A549 (cell line): ENCODE measurements at regions of chr17 and their contacts with region 1.

Region 1: DNA sequence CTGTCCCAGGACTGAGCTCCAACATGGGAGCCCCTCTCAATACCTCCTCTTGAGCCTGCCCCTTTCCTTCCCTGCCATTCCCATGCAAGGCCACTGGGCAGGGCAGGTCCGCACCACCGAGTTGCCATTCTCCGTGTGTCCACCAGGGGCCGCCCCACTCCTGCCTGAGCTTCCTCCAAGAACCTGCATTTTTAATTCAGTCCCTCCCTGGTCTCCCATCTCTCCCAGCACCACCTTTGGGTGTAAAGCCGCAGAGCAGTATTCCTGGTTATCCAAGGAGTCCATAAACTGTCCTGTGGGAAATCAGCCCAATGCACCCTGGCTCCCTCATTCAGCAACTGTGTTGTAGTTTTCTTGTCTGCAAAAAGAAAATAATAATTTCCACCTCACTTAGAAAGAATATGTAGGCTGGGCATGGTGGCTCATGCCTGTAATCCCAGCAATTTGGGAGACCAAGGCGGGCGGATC is 15.9 kb upstream of the ANKRD40CL start:
- DNase-seq: peak; percentile 96 to 99
- ATAC-seq: peak; percentile 97 to 99
- H3K4me3 ChIP-seq: no peak overlapping the region
- H3K27ac ChIP-seq: no peak overlapping the region
- H3K4me1 ChIP-seq: 0 out of 3 replicates have a peak, but pooled peaks cover 3% of the 10 kb centered on the region
- CTCF ChIP-seq: peak; percentile 98
- EP300 ChIP-seq: no peak
- POLR2A ChIP-seq: no peak
- RAD21 ChIP-seq: peak; percentile 97 to 98

Region 2: DNA sequence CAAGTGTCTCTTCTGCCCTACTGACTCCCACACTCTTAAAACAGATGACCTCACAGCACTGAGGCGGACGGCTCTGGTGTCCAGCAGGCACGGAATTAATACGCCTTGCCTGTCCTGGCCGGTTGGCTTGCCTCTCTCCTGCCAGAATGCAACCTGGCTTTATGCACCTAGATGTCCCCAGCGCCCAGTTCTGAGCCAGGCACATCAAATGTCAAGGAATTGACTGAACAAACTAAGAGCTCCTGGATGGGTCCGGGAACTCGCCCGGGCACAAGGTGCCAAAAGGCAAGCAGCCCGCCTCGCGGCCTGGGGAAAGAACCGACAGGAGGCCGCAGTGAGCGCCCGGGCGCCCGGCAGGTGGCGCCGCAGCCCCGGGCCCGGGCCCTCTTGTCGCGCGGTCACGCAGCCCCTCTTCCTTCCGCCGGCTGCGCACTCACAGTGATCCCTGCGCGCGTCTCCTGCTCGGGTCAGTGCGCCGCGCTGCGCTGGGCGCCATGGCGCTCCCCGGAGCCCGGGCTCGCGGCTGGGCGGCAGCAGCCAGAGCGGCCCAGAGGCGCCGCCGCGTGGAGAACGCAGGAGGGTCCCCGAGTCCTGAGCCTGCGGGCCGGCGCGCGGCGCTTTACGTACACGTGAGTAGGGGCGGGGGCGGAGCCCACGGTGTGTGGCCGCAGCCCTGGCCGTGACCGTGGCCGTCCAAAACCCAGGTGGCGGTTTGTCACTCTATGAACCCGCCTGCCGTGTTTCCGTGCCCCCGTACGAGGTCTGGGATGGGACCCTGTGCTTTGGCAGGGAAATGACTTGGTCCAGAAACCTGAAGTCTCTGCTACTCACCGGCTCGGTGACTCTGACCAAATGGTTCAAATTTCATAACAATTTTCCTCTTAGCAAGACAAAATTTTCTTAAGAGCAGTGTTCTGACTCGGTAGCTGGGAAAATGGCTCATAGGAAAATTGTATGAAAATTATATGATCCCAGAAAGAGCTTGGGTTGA is 304.5 kb before region 1 on chr17 and contains the start of gene RSAD1:
- CTCF ChIA-PET with region 1: interaction called, 12 read pairs
- POLR2A ChIA-PET with region 1: no interaction called
- DNase-seq: peak; percentile 85 to 96
- ATAC-seq: peak; percentile 78 to 89
- H3K4me3 ChIP-seq: peak within 1 kb of the TSS; percentile 65
- H3K27ac ChIP-seq: peak within 1 kb of the TSS; percentile 79 to 91
- H3K4me1 ChIP-seq: peaks cover 31% of the 10 kb centered on the region
- CTCF ChIP-seq: peak; percentile 100
- EP300 ChIP-seq: no peak
- POLR2A ChIP-seq: peak; percentile 90
- RAD21 ChIP-seq: peak; percentile 41 to 78
- polyA plus RNA-seq, gene RSAD1: 38.2 and 47.2 TPM in 2 replicates

Region 3: DNA sequence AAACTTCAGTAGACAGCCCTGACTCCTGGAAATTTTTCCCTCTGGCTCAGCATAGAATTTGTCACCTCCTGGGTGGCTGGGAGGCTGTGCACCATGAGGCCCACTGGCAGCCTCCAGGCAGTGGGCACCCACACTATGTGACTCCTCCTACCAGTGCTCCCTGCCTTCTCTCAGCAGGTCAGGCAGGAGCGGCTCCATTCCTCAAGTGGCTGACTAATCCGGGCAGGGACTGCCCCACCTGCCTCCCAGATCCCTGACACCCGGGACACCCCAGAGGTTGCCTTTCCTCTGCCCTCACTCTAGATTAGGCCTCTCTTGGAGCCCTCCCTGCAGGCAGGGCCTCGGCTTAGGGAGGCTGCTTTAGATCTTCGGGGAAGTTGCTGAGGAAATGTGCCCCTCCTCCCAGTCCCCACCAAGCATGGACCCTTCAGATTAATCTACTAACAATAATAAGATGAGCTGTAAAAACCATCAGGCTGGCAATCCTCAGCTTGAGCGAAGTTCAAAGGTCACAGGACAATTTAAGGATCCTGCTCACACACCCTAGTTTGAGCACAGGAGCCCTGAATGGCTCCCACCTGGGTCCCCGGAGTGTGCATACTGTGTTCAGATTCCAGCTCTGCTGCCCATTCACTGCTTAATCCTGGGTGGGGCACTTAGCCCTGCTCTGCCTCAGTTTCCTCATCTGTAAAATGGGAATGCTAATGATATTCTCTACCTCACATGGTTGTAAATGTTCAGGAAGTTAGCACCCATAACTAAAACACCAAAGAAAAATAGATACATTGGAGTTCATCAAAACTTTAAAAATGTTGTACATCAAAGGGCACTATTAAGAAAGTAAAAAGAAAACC is 285.0 kb before region 1 on chr17:
- CTCF ChIA-PET with region 1: no interaction called
- POLR2A ChIA-PET with region 1: no interaction called
- DNase-seq: no peak
- ATAC-seq: peak in 1 of 2 experiments; percentile 25; a peak in 3 of 6 replicates
- H3K4me3 ChIP-seq: no peak overlapping the region
- H3K27ac ChIP-seq: no peak overlapping the region
- H3K4me1 ChIP-seq: peaks cover 5% of the 10 kb centered on the region; the same call in 1 of the 3 replicates
- CTCF ChIP-seq: no peak
- EP300 ChIP-seq: no peak
- POLR2A ChIP-seq: no peak
- RAD21 ChIP-seq: no peak

Region 4: DNA sequence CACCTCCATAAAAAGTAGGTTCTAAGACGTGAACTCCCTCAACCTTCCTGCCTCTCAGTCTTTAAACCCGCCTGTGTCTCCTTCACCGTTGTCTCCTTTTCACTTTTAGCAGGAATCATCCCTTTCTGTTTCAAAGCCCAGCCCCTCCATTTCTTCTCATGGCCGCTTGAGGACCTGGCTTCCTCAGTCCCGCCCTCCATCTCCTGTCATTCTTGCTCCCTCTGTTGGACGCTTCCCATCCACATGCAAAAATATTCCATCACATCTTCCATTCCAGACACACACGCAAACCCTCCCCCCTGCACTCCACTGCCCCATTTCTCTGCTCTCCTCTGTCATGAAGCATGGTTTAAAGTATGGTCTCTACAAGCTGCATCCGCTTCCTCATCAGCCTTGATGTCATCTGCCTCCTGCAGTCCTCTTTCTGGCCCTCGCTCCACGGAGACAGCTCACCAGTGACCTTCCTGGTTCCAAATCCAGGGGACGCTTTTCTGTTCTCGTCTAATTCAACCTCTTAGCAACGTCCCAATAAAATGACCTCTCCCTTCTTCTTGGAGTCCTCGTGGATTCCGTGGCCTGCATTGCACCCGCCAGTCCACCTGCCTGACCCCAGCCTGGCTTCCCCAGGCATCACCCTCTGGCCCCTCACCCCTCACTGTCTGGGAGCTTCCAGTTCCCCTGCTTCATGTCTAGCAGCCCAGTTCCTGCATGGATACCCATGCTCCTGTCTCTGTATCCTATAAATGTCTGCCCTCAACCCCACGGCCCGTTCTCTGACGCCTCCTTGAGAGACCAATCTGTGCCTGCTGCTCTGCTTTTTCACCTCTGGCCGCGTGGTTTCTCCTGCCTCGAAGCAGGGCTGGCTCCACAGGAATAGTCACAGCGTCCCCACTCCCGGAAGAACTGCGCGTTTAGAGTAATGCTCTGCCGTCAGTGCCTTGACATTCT is 101.7 kb before region 1 on chr17:
- CTCF ChIA-PET with region 1: no interaction called
- POLR2A ChIA-PET with region 1: no interaction called
- DNase-seq: peak; percentile 86 to 91
- ATAC-seq: peak; percentile 53 to 75
- H3K4me3 ChIP-seq: no peak overlapping the region
- H3K27ac ChIP-seq: peak overlapping the region; percentile 97 to 98
- H3K4me1 ChIP-seq: peaks cover 99% of the 10 kb centered on the region
- CTCF ChIP-seq: peak; percentile 66
- EP300 ChIP-seq: no peak
- POLR2A ChIP-seq: no peak
- RAD21 ChIP-seq: peak; percentile 81 to 94

Region 5: GRCh38 chr17:50749245-50749644 is 34.0 kb before region 1 on chr17:
- CTCF ChIA-PET with region 1: interaction called, 11 read pairs
- POLR2A ChIA-PET with region 1: no interaction called
- DNase-seq: no peak
- ATAC-seq: no peak; a peak in 1 of 6 replicates
- H3K4me3 ChIP-seq: no peak overlapping the region
- H3K27ac ChIP-seq: no peak overlapping the region
- H3K4me1 ChIP-seq: no peaks in the 10 kb centered on the region
- CTCF ChIP-seq: no peak
- EP300 ChIP-seq: no peak
- POLR2A ChIP-seq: no peak
- RAD21 ChIP-seq: no peak

Region 6: DNA sequence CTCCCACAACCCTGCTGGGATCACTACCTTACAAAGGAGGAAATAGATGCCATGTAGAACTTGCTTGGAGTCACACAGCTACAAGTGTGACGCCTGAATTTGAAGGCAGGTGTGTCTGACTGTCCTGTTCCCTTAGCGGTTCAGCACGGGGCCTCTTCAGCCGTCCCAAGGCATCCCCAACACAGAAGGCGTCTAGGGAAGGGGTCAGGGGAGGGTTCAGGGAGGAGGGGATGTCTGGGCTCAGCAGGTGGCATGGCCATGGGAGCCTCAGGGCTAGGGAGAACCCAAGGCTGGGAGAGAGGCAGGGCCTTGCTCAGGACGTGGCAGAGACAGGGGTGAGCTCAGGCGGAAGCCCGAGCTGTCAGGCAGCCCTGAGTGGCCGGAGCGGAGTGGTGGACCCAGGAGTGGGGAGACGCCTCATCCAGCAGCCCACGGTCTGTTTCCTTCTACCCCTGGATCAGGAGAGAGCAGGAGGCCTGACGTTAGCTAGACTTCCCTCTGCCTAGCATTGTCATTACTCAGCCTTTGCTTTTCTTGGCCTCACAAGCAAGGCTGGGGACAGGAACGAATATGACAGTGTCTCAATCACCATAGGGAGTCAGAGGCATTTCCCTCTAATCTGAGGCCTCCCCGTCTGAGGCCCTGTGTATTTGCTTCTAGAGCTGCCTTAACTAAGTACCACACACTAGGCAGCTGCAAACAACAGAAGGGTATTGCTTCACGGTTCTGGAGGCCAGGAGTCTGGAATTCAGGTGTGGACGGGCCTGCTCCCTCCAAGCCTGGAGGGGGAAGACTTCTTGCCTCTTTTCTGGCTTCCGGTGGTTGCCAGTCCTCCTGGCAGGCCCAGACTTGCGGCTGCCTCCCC is 15.4 kb after region 1 on chr17:
- CTCF ChIA-PET with region 1: interaction called, 114 read pairs
- POLR2A ChIA-PET with region 1: no interaction called
- DNase-seq: no peak
- ATAC-seq: peak in 1 of 2 experiments; percentile 28; a peak in 2 of 6 replicates
- H3K4me3 ChIP-seq: no peak overlapping the region
- H3K27ac ChIP-seq: no peak overlapping the region
- H3K4me1 ChIP-seq: no peaks in the 10 kb centered on the region
- CTCF ChIP-seq: no peak
- EP300 ChIP-seq: no peak
- POLR2A ChIP-seq: no peak
- RAD21 ChIP-seq: no peak

Region 7: GRCh38 chr17:50834429-50835300 is 51.4 kb after region 1 on chr17:
- CTCF ChIA-PET with region 1: interaction called, 324 read pairs
- POLR2A ChIA-PET with region 1: no interaction called
- DNase-seq: no peak
- ATAC-seq: no peak
- H3K4me3 ChIP-seq: no peak overlapping the region
- H3K27ac ChIP-seq: no peak overlapping the region
- H3K4me1 ChIP-seq: no peaks in the 10 kb centered on the region
- CTCF ChIP-seq: no peak
- EP300 ChIP-seq: no peak
- POLR2A ChIP-seq: no peak
- RAD21 ChIP-seq: no peak

Region 8: DNA sequence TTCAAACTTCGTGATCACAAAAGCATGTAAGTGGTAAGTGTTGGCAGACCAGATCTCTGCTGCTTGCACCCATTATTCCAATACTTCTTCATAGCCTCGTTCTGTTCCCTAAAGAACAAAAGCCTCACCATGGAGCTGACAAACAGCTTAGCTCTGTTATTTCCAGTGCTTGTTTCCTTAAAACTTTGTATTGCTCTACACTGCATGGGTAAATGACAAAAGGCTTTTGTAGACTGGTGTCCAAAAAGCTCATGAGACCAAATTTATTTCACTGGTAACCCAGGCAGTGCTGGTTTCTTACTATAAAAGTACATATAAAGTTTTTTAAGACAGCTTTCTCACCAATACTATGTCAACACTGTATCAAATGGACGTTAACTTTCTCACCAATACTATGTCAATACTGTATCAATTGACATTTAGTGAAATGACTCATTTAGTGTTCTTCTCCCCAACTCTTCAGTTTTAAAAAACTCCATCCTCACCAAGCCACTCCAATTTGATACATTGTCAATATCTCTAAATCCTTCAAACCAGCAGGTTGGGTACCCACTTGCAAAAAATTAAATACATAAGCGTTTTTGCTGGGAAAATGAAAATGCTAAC is 77.9 kb after region 1 on chr17:
- CTCF ChIA-PET with region 1: interaction called, 16 read pairs
- POLR2A ChIA-PET with region 1: interaction called, 10 read pairs
- DNase-seq: no peak
- ATAC-seq: no peak
- H3K4me3 ChIP-seq: 0 out of 3 replicates have a peak overlapping the region, but pooled peaks have one; percentile 92
- H3K27ac ChIP-seq: no peak overlapping the region
- H3K4me1 ChIP-seq: peaks cover 34% of the 10 kb centered on the region
- CTCF ChIP-seq: no peak
- EP300 ChIP-seq: no peak
- POLR2A ChIP-seq: no peak
- RAD21 ChIP-seq: no peak

Region 9: GRCh38 chr17:50956750-50957523 is 173.7 kb after region 1 on chr17:
- CTCF ChIA-PET with region 1: interaction called, 155 read pairs
- POLR2A ChIA-PET with region 1: no interaction called
- DNase-seq: peak; percentile 69 to 71
- ATAC-seq: peak; percentile 73 to 87
- H3K4me3 ChIP-seq: no peak overlapping the region
- H3K27ac ChIP-seq: peak overlapping the region; percentile 29 to 81; a peak in 3 of 6 replicates
- H3K4me1 ChIP-seq: peaks cover 23% of the 10 kb centered on the region
- CTCF ChIP-seq: peak; percentile 87
- EP300 ChIP-seq: no peak
- POLR2A ChIP-seq: no peak
- RAD21 ChIP-seq: peak; percentile 80 to 85

Region 10: GRCh38 chr17:51035431-51035830 is 252.2 kb after region 1 on chr17:
- CTCF ChIA-PET with region 1: no interaction called
- POLR2A ChIA-PET with region 1: no interaction called
- DNase-seq: no peak
- ATAC-seq: no peak
- H3K4me3 ChIP-seq: no peak overlapping the region
- H3K27ac ChIP-seq: no peak overlapping the region
- H3K4me1 ChIP-seq: no peaks in the 10 kb centered on the region
- CTCF ChIP-seq: no peak
- EP300 ChIP-seq: no peak
- POLR2A ChIP-seq: no peak
- RAD21 ChIP-seq: no peak

Region 11: GRCh38 chr17:52677991-52678620 is 1894.9 kb after region 1 on chr17:
- CTCF ChIA-PET with region 1: no interaction called
- POLR2A ChIA-PET with region 1: no interaction called
- DNase-seq: no peak
- ATAC-seq: no peak
- H3K4me3 ChIP-seq: no peak overlapping the region
- H3K27ac ChIP-seq: no peak overlapping the region
- H3K4me1 ChIP-seq: no peaks in the 10 kb centered on the region
- CTCF ChIP-seq: no peak
- EP300 ChIP-seq: no peak
- POLR2A ChIP-seq: no peak
- RAD21 ChIP-seq: no peak